ENCODE measurements at regions of chr1 and their contacts with region 1.

Region 1: GRCh38 chr1:185926562-185926961 is 192.4 kb downstream of the HMCN1 start:
- DNase-seq: no peak
- H3K4me3 ChIP-seq: no peak overlapping the region
- CTCF ChIP-seq: no peak

Region 2: DNA sequence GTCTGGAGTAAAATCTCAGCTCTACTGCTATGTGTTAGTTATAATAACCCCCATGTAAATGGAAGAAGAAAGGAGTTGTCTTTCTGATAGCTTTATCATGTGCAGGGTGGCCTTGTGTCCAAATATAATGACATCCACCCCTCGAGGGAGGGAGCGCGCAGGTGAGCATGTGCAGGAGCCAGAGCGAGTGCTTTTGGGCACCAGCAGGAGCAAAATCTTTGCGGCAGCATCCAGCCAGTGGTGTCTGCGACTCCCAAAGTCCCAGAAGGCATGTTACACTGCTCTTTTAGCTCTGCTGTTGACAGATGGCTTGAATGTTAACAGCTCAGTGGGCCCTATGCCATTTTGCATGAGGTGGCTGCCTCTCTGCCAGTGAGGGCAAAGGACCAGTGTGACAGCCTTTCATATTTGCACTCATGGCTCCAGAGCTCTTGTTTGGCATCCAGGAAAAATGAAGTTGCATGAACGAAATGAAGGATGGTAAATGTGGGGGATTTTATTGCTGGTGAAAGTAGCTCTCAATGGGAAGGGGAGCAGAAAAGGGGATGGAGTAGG is 45.7 kb before region 1 on chr1:
- in situ Hi-C with region 1: no loop called
- DNase-seq: no peak
- H3K4me3 ChIP-seq: no peak overlapping the region
- CTCF ChIP-seq: no peak

Region 3: GRCh38 chr1:185973645-185974044 is 47.1 kb after region 1 on chr1:
- in situ Hi-C with region 1: loop called (anchors 5 kb)
- DNase-seq: peak; percentile 99
- H3K4me3 ChIP-seq: no peak overlapping the region
- CTCF ChIP-seq: no peak